ENCODE measurements at regions of chr1 and their contacts with region 1.

Region 1: DNA sequence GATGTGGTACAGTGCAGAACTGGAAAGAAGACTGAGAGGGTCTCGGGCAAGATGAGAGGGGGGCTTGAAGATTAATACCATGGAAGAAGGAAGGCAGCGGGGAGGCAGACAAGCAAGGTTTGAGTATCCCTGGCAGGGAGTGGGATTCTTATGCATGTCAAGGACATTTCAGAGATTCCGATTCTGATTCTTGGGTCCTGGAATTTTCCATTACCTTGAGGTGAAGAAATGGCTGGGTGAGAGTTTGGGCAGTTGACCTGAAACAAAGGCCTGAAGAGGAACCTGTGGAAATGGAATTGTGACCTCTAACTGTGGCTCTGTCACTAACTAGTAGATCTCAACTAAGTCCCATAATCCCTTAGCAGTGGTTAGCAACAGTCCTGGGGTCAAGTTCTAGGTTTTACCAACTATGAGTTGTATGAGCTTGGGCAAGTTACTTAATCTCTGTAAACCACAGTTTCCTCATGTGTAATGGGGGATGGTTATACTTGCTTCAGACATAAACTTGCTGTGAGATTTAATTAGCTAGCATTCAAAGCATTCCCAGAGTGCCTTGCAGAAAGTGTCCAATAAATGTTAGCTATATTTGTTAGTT is 8.6 kb upstream of the ACTN2 start:
- DNase-seq: no peak
- H3K4me3 ChIP-seq: no peak overlapping the region
- H3K27ac ChIP-seq: no peak overlapping the region
- H3K4me1 ChIP-seq: no peaks in the 10 kb centered on the region
- H3K27me3 ChIP-seq: peaks cover 77% of the 10 kb centered on the region
- CTCF ChIP-seq: no peak

Region 2: DNA sequence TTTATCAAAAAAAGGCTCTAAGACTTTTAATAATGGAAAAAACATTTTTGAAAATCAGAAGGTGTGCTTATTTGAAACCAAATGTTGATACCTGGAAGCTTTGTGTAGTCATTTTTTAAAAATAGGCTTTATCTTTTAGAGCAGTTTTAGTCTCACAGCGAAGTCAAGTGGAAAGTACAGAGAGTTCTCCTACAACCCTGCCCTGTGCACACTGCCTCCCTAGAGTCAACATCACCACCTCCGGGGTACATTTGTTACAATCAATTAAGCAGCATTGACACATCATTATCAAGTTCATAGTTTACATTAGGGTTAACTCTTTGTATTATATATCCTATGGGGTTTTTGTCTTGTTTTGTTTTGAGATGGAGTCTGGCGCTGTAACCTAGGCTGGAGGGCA is 385.3 kb before region 1 on chr1:
- CTCF ChIA-PET with region 1: interaction called, 11 read pairs
- POLR2A ChIA-PET with region 1: no interaction called
- intact Hi-C with region 1: no loop called
- DNase-seq: no peak
- H3K4me3 ChIP-seq: no peak overlapping the region
- H3K27ac ChIP-seq: no peak overlapping the region
- H3K4me1 ChIP-seq: no peaks in the 10 kb centered on the region
- H3K27me3 ChIP-seq: no peaks in the 10 kb centered on the region
- CTCF ChIP-seq: no peak

Region 3: GRCh38 chr1:236608930-236609726 is 68.6 kb before region 1 on chr1:
- CTCF ChIA-PET with region 1: no interaction called
- POLR2A ChIA-PET with region 1: no interaction called
- intact Hi-C with region 1: no loop called
- DNase-seq: peak; percentile 49 to 64
- H3K4me3 ChIP-seq: no peak overlapping the region
- H3K27ac ChIP-seq: no peak overlapping the region
- H3K4me1 ChIP-seq: no peaks in the 10 kb centered on the region
- H3K27me3 ChIP-seq: peaks cover 24% of the 10 kb centered on the region
- CTCF ChIP-seq: peak; percentile 83

Region 4: DNA sequence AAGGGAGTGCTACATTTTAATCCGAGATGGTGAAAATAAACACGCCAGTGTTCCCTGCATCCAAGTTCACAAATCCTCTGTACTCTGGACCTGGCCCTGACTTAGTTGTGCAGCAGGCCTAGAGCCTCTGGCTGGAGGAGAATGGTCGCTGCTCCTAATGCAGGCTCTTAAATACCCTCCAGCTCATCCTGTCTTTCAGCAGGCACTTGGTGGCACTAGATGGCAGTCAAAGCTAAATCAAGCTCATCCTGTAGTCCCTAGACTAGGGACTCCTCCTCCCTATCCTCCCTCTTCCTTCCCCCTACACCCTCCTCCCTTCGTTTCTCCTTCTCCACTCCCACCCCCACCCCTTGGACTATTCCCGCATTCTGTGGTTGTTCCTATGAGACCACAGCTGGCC is 75.8 kb after region 1 on chr1:
- CTCF ChIA-PET with region 1: no interaction called
- POLR2A ChIA-PET with region 1: no interaction called
- intact Hi-C with region 1: no loop called
- DNase-seq: peak in 1 of 2 experiments; percentile 41
- H3K4me3 ChIP-seq: no peak overlapping the region
- H3K27ac ChIP-seq: no peak overlapping the region
- H3K4me1 ChIP-seq: no peaks in the 10 kb centered on the region
- H3K27me3 ChIP-seq: peaks cover 85% of the 10 kb centered on the region
- CTCF ChIP-seq: peak; percentile 51; the same call in 1 of the 2 replicates

Region 5: DNA sequence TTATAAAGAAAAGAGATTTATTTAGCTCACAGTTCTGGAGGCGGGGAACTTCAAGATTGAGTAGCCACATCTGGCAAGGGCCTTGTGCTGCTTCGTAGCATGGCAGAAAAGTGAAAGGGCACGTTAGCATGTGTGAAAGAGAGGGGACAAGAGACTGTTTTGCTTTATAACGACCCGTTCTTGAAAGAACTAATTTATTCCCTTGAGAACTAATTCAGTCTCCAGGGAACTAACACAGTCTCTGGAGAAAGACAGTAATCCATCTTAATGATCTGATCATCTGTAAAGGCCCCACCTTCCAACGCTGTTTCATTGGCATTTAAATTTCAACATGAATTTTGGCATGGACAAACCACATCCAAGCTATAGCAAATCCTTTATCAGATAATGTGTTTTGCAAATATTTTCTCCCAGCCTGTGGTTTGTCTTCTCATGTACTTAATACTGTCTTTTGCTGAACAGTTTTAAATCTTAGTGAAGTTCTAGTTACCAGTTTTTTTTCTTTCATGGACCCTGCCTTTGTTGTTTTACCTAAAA is 143.4 kb after region 1 on chr1:
- CTCF ChIA-PET with region 1: no interaction called
- POLR2A ChIA-PET with region 1: no interaction called
- intact Hi-C with region 1: no loop called
- DNase-seq: no peak
- H3K4me3 ChIP-seq: no peak overlapping the region
- H3K27ac ChIP-seq: no peak overlapping the region
- H3K4me1 ChIP-seq: no peaks in the 10 kb centered on the region
- H3K27me3 ChIP-seq: no peaks in the 10 kb centered on the region
- CTCF ChIP-seq: no peak